Right ventricle myocardium inferior (tissue), 1 donor: ENCODE measurements at regions of chrX and their contacts with region 1.

Region 1: DNA sequence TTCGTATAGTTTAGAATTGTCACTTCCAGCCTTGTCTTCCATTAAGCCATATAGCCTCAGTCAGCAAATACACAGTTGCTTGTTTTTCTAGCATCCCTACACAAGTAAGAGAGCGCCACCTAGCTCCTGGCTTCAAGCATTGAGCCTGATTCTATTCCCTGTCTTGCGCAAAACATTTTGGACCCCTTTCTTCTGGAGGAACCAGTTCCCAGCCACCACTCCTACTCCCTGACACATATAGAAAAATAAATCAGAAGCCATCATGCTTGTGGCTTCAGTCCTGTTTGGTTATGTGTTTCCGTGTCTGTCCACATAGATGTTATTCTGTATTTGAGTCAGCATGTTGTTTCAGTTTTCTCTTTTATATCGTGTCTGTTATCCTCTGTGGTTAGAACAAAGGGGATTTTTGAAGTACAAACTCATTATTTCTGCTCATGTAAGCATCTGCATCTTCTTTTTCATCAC is 59.9 kb downstream of the GK start:
- DNase-seq: peak; percentile 65
- ATAC-seq: no peak

Region 2: GRCh38 chrX:30635630-30636029 is 77.5 kb before region 1 on chrX:
- intact Hi-C with region 1: loop called (anchors 5 kb)
- DNase-seq: no peak
- ATAC-seq: no peak